T-cell (primary cell): ENCODE measurements at regions of chr2 and their contacts with region 1.

Region 1: DNA sequence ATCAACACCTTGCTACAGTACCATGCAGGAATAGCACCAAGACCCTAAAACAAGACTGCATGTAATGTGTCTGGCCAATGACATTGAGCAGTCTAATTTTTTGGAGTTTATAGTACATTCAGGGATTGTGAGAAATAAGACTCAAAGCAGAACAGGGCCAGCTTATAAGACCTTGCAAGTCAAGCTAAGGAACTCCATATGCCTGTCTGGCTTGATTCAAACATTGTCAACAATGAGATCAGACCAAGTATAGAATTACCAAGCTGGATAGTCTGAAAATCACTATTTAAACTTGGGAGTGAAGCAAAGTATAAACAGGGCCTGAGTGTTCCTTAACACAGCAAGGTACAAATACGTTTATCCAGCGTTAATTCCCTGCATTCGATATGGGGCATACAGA is 370.9 kb downstream of the CNTNAP5 start:
- DNase-seq: no peak
- ATAC-seq: no peak
- H3K4me3 ChIP-seq: no peak overlapping the region
- H3K4me3 Mint-ChIP-seq: no peak overlapping the region
- H3K27ac ChIP-seq: no peak overlapping the region
- H3K27ac Mint-ChIP-seq: no peak overlapping the region
- H3K4me1 ChIP-seq: no peaks in the 10 kb centered on the region
- H3K4me1 Mint-ChIP-seq: no peaks in the 10 kb centered on the region
- H3K27me3 ChIP-seq: no peaks in the 10 kb centered on the region
- H3K27me3 Mint-ChIP-seq: no peaks in the 10 kb centered on the region

Region 2: DNA sequence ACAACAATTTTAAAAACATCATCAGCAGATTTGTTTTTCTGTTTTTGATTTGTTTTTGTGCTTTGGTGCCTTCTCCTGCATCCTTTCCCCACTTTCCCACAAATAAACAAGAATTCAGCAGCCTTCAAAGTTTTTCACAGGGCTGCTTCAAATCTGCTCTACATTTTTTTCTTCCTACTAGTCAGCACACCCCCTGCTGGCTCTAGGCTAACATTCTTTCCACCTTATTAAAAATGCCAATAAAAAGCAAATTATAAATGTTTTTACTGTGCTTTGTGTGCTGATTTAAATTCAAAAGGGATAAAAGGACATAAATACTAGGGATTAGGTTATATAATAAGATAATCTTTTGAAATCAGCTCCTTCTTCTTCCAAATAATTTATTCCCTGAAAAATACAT is 377.1 kb before region 1 on chr2:
- CTCF ChIA-PET with region 1: no interaction called
- POLR2A ChIA-PET with region 1: interaction called in 1 of 2 experiments, 13 read pairs
- DNase-seq: no peak
- ATAC-seq: no peak
- H3K4me3 ChIP-seq: no peak overlapping the region
- H3K4me3 Mint-ChIP-seq: no peak overlapping the region
- H3K27ac ChIP-seq: no peak overlapping the region
- H3K27ac Mint-ChIP-seq: no peak overlapping the region
- H3K4me1 ChIP-seq: no peaks in the 10 kb centered on the region
- H3K4me1 Mint-ChIP-seq: no peaks in the 10 kb centered on the region
- H3K27me3 ChIP-seq: peaks cover 0 to under 1% of the 10 kb centered on the region in 2 experiments
- H3K27me3 Mint-ChIP-seq: peaks cover 6 to 7% of the 10 kb centered on the region in 2 donors